ENCODE measurements at regions of chr6 and their contacts with region 1.

Region 1: GRCh38 chr6:107318100-107318736 is 141.1 kb downstream of the PDSS2 start:
- DNase-seq: peak; percentile 62
- CTCF ChIP-seq: peak; percentile 69

Region 2: GRCh38 chr6:107330168-107330567 is 11.9 kb after region 1 on chr6:
- CTCF ChIA-PET with region 1: interaction called, 31 read pairs
- POLR2A ChIA-PET with region 1: no interaction called
- DNase-seq: peak; percentile 57
- CTCF ChIP-seq: no peak

Region 3: GRCh38 chr6:107374264-107374663 is 56.0 kb after region 1 on chr6:
- CTCF ChIA-PET with region 1: no interaction called
- POLR2A ChIA-PET with region 1: no interaction called
- DNase-seq: no peak
- CTCF ChIP-seq: no peak

Region 4: GRCh38 chr6:107459283-107460082 is 141.3 kb after region 1 on chr6 and contains the start of gene PDSS2:
- CTCF ChIA-PET with region 1: interaction called, 15 read pairs
- POLR2A ChIA-PET with region 1: no interaction called
- DNase-seq: peak; percentile 97
- CTCF ChIP-seq: peak; percentile 58

Region 5: GRCh38 chr6:107523054-107523791 is 205.0 kb after region 1 on chr6:
- CTCF ChIA-PET with region 1: no interaction called
- POLR2A ChIA-PET with region 1: no interaction called
- DNase-seq: no peak
- CTCF ChIP-seq: no peak